ENCODE measurements at regions of chr9 and their contacts with region 1.

Region 1: DNA sequence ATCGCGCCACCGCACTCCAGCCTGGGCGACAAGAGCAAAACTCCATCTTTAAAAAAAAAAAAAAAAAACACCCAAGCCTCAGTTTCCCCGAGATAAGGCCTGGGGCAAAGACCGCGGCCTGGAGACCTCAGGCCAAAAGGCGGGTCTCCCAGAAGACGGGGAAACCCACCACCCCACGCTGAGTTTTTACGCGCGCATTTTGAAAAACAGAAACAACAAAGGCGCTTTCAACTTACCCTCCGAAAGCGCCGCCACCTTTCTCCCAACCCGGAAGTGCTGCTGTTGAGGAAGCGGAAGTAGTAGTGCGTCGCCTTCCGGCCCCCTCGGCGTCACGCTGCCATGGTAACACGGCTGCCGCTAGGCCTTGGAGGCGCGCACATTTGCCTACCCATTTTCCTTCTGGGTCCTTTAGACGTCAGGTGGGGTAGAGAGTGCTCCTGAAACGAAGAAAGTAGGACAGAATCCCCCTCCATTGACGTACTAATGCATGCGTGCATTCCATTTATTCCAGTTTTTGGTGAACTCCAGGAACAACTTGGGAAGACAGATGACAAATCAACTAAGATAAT is at the start of gene TTF1:
- DNase-seq: peak; percentile 97
- ATAC-seq: peak; percentile 79
- H3K4me3 ChIP-seq: peak within 1 kb of the TSS; percentile 72 to 84 (median 77)
- H3K4me3 Mint-ChIP-seq: peak within 1 kb of the TSS; percentile 96
- H3K27ac ChIP-seq: peak within 1 kb of the TSS; percentile 52 to 84
- H3K27ac Mint-ChIP-seq: peak within 1 kb of the TSS; percentile 95
- H3K4me1 ChIP-seq: peaks cover 43 to 50% of the 10 kb centered on the region in 2 donors
- H3K4me1 Mint-ChIP-seq: peaks cover 49% of the 10 kb centered on the region
- H3K27me3 ChIP-seq: peaks cover 0 to 10% (median 2%) of the 10 kb centered on the region in 4 experiments
- H3K27me3 Mint-ChIP-seq: no peaks in the 10 kb centered on the region
- CTCF ChIP-seq: no peak
- total RNA-seq, gene TTF1: 26.3 and 28.5 TPM in 2 replicates

Region 2: DNA sequence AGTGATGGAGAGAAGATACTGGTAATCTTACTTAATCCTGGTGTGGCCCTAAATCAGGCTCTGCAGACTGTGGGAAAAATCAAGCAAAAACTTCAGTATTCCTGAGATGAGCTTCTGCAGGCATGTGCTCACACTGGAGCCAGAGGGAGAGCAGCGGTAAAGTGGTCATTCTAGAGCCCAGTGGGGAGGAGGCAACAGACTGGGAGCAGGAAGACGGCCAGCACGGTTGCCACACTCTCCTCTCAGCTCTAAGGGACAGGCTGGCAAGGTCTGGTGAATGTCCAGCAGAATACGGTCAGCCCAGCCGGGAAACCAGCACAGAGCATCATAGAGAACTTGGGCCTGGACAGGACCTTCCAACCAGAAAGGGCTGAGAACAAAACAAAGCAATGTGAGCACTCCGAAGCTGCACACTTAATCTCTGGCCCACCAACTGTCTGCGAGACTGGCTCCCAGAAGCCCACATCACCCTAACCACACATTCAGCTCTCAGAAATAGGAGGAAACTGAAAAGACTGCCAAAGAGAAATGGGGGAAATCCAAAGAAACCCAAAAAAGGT is 357.2 kb before region 1 on chr9:
- CTCF ChIA-PET with region 1: no interaction called
- POLR2A ChIA-PET with region 1: no interaction called
- intact Hi-C with region 1: no loop called
- DNase-seq: no peak
- ATAC-seq: no peak
- H3K4me3 ChIP-seq: no peak overlapping the region
- H3K4me3 Mint-ChIP-seq: no peak overlapping the region
- H3K27ac ChIP-seq: no peak overlapping the region
- H3K27ac Mint-ChIP-seq: no peak overlapping the region
- H3K4me1 ChIP-seq: no peaks in the 10 kb centered on the region
- H3K4me1 Mint-ChIP-seq: peaks cover 2% of the 10 kb centered on the region
- H3K27me3 ChIP-seq: no peaks in the 10 kb centered on the region
- H3K27me3 Mint-ChIP-seq: no peaks in the 10 kb centered on the region
- CTCF ChIP-seq: no peak

Region 3: GRCh38 chr9:132079391-132080091 is 327.1 kb before region 1 on chr9 and contains the start of gene MED27:
- CTCF ChIA-PET with region 1: interaction called, 4 read pairs
- POLR2A ChIA-PET with region 1: no interaction called
- intact Hi-C with region 1: loop called (anchors 5 kb)
- DNase-seq: peak; percentile 95
- ATAC-seq: peak; percentile 99
- H3K4me3 ChIP-seq: peak within 1 kb of the TSS; percentile 60 to 89 (median 81)
- H3K4me3 Mint-ChIP-seq: peak within 1 kb of the TSS; percentile 96
- H3K27ac ChIP-seq: peak within 1 kb of the TSS; percentile 13 to 80
- H3K27ac Mint-ChIP-seq: peak within 1 kb of the TSS; percentile 94
- H3K4me1 ChIP-seq: peaks cover 15 to 17% of the 10 kb centered on the region in 2 donors
- H3K4me1 Mint-ChIP-seq: peaks cover 28% of the 10 kb centered on the region
- H3K27me3 ChIP-seq: peaks cover 0 to 5% (median 0%) of the 10 kb centered on the region in 4 experiments
- H3K27me3 Mint-ChIP-seq: peaks cover 4% of the 10 kb centered on the region
- CTCF ChIP-seq: no peak
- total RNA-seq, gene MED27: 17.4 and 24.4 TPM in 2 replicates

Region 4: DNA sequence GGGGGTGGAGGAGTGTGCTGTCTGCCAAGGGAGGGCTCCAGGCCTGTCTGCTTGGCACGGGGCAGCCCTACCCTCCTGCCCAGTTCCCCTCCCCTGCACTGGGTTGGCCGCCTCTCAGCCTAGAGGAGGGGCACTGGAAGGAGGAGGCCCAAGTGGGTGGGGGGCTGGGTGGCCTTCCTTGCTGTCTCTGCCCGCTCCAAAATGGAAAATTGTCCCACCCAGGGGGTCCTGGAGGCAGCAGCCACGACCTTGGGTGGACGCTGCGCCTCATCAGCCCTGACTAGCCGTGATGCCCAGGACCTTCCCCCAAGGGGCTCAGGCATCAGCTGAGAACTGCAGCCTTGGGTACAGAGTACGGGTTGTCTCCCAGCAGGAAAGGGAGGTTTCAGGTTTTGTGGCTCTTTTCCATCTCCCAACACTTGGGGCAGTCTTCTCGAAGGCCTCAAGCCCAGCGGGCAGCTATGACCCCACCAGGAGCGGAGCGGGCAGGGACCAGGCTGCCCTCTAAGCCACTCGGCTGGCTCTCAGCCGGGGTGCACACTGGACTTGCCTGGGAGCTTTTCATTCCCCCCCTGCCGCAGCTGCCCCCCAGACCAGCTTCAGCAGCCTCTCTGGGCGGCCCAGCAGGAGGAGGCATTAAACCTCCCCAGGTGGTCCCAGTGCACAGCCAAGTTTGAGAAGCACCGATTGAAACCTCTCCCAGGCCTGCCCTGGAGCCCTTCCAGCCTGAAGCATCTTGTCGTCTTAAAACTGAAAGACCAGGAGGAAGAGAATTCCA is 224.1 kb before region 1 on chr9:
- CTCF ChIA-PET with region 1: no interaction called
- POLR2A ChIA-PET with region 1: no interaction called
- intact Hi-C with region 1: no loop called
- DNase-seq: no peak
- ATAC-seq: no peak
- H3K4me3 ChIP-seq: no peak overlapping the region
- H3K4me3 Mint-ChIP-seq: no peak overlapping the region
- H3K27ac ChIP-seq: no peak overlapping the region
- H3K27ac Mint-ChIP-seq: no peak overlapping the region
- H3K4me1 ChIP-seq: peaks cover 3% of the 10 kb centered on the region in 2 donors
- H3K4me1 Mint-ChIP-seq: no peaks in the 10 kb centered on the region
- H3K27me3 ChIP-seq: peaks cover 0 to 13% (median 1%) of the 10 kb centered on the region in 4 experiments
- H3K27me3 Mint-ChIP-seq: peaks cover 34% of the 10 kb centered on the region
- CTCF ChIP-seq: no peak

Region 5: GRCh38 chr9:132381966-132382541 is 24.6 kb before region 1 on chr9:
- CTCF ChIA-PET with region 1: interaction called, 5 read pairs
- POLR2A ChIA-PET with region 1: interaction called, 3 read pairs
- intact Hi-C with region 1: loop called (anchors 1 kb)
- DNase-seq: peak; percentile 84
- ATAC-seq: peak; percentile 67
- H3K4me3 ChIP-seq: peak overlapping the region in 4 of 5 experiments; percentile 22 to 48 (median 34)
- H3K4me3 Mint-ChIP-seq: peak overlapping the region; percentile 88
- H3K27ac ChIP-seq: peak overlapping the region; percentile 81 to 96
- H3K27ac Mint-ChIP-seq: peak overlapping the region; percentile 99
- H3K4me1 ChIP-seq: peaks cover 62 to 69% of the 10 kb centered on the region in 2 donors
- H3K4me1 Mint-ChIP-seq: peaks cover 71% of the 10 kb centered on the region
- H3K27me3 ChIP-seq: no peaks in the 10 kb centered on the region
- H3K27me3 Mint-ChIP-seq: no peaks in the 10 kb centered on the region
- CTCF ChIP-seq: no peak

Region 6: GRCh38 chr9:132575005-132575609 is 168.5 kb after region 1 on chr9:
- CTCF ChIA-PET with region 1: no interaction called
- POLR2A ChIA-PET with region 1: no interaction called
- intact Hi-C with region 1: loop called (anchors 2 kb)
- DNase-seq: peak; percentile 42
- ATAC-seq: no peak
- H3K4me3 ChIP-seq: no peak overlapping the region
- H3K4me3 Mint-ChIP-seq: no peak overlapping the region
- H3K27ac ChIP-seq: no peak overlapping the region
- H3K27ac Mint-ChIP-seq: no peak overlapping the region
- H3K4me1 ChIP-seq: peaks cover 0 to 6% of the 10 kb centered on the region in 2 donors
- H3K4me1 Mint-ChIP-seq: no peaks in the 10 kb centered on the region
- H3K27me3 ChIP-seq: peaks cover 0 to 61% (median 35%) of the 10 kb centered on the region in 4 experiments
- H3K27me3 Mint-ChIP-seq: peaks cover 68% of the 10 kb centered on the region
- CTCF ChIP-seq: no peak

Region 7: DNA sequence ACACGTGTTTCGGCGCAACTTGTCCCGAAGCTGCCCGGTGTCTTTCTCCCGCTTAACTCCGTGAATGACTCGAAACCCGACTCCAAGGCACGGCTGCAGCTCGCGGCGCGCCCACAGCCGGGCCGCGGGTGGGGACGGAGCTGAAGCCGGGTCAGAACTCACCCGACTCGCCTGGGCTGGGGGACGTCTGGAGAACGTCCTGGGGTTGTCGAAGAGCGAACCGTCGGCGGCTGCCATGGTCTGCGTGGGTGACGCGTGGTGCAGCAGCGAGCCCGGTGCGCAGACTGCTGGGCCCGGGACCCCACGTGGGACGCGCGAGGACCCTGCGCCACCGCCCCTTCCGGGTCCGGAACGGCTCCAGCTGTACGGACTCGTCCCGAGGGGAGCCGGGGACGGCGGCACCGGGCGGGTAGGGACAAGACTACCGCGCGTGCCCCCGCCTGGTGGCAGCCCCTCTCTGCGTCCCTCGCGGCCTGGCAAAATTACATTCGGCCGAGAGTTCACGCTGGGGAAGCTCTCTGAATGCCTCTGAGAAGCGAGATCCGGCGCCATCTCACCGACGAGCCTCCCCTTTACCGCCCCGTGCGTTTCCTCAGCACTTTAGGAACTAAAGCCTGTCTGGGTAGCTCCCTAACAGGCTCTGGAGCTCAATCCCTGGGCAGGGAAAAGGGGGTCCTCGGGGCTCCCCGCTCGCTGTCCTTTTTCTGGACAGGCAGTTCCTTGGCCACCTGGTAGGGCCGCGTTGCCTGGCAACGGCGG is 263.2 kb after region 1 on chr9 and contains the start of gene DDX31:
- CTCF ChIA-PET with region 1: no interaction called
- POLR2A ChIA-PET with region 1: no interaction called
- intact Hi-C with region 1: loop called (anchors 2 kb)
- DNase-seq: peak; percentile 94
- ATAC-seq: peak; percentile 82
- H3K4me3 ChIP-seq: peak within 1 kb of the TSS; percentile 73 to 100 (median 96)
- H3K4me3 Mint-ChIP-seq: peak within 1 kb of the TSS; percentile 93
- H3K27ac ChIP-seq: peak within 1 kb of the TSS; percentile 86 to 95
- H3K27ac Mint-ChIP-seq: peak within 1 kb of the TSS; percentile 94
- H3K4me1 ChIP-seq: peaks cover 20 to 28% of the 10 kb centered on the region in 2 donors
- H3K4me1 Mint-ChIP-seq: peaks cover 52% of the 10 kb centered on the region
- H3K27me3 ChIP-seq: no peaks in the 10 kb centered on the region
- H3K27me3 Mint-ChIP-seq: no peaks in the 10 kb centered on the region
- CTCF ChIP-seq: no peak
- total RNA-seq, gene DDX31: 22.2 and 22.7 TPM in 2 replicates

Measured in B cell (primary cell).